Mammary epithelial cell (primary cell): ENCODE measurements at regions of chr7 and their contacts with region 1.

Region 1: GRCh38 chr7:142323706-142324105 is 65.8 kb upstream of the PRSS58 start:
- DNase-seq: peak; percentile 9
- H3K4me3 ChIP-seq: no peak overlapping the region
- H3K27ac ChIP-seq: no peak overlapping the region
- H3K4me1 ChIP-seq: peaks cover 6% of the 10 kb centered on the region
- H3K27me3 ChIP-seq: no peaks in the 10 kb centered on the region
- CTCF ChIP-seq: peak; percentile 59 to 72

Region 2: GRCh38 chr7:141551094-141551781 is 772.5 kb before region 1 on chr7 and contains the start of gene AGK:
- CTCF ChIA-PET with region 1: interaction called, 13 read pairs
- dilution Hi-C with region 1: no loop called
- in situ Hi-C with region 1: no loop called
- intact Hi-C with region 1: no loop called
- DNase-seq: peak; percentile 66
- H3K4me3 ChIP-seq: peak within 1 kb of the TSS; percentile 65 to 97 (median 84)
- H3K27ac ChIP-seq: peak within 1 kb of the TSS; percentile 49
- H3K4me1 ChIP-seq: peaks cover 6% of the 10 kb centered on the region
- H3K27me3 ChIP-seq: no peaks in the 10 kb centered on the region
- CTCF ChIP-seq: no peak
- total RNA-seq, gene AGK: 26.2 to 34.7 TPM

Region 3: GRCh38 chr7:142001163-142001874 is 322.4 kb before region 1 on chr7:
- CTCF ChIA-PET with region 1: no interaction called
- dilution Hi-C with region 1: no loop called
- in situ Hi-C with region 1: no loop called
- intact Hi-C with region 1: no loop called
- DNase-seq: peak; percentile 75
- H3K4me3 ChIP-seq: no peak overlapping the region
- H3K27ac ChIP-seq: peak overlapping the region; percentile 81
- H3K4me1 ChIP-seq: peaks cover 28% of the 10 kb centered on the region
- H3K27me3 ChIP-seq: no peaks in the 10 kb centered on the region
- CTCF ChIP-seq: no peak

Region 4: GRCh38 chr7:142338633-142339501 is 15.2 kb after region 1 on chr7:
- CTCF ChIA-PET with region 1: interaction called, 19 read pairs
- dilution Hi-C with region 1: no loop called
- in situ Hi-C with region 1: no loop called
- intact Hi-C with region 1: no loop called
- DNase-seq: no peak
- H3K4me3 ChIP-seq: no peak overlapping the region
- H3K27ac ChIP-seq: no peak overlapping the region
- H3K4me1 ChIP-seq: no peaks in the 10 kb centered on the region
- H3K27me3 ChIP-seq: no peaks in the 10 kb centered on the region
- CTCF ChIP-seq: peak; percentile 42 to 55